CD4-positive, alpha-beta T cell (primary cell): ENCODE measurements at regions of chr15 and their contacts with region 1.

Region 1: GRCh38 chr15:81106560-81106959 is 27.5 kb upstream of the CFAP161 start:
- DNase-seq: peak in 13 of 14 experiments; percentile 4 to 64 (median 20)
- ATAC-seq: peak; percentile 24
- H3K4me3 ChIP-seq: no peak overlapping the region
- H3K4me3 Mint-ChIP-seq: no peak overlapping the region
- H3K27ac ChIP-seq: no peak overlapping the region
- H3K27ac Mint-ChIP-seq: no peak overlapping the region
- H3K4me1 ChIP-seq: no peaks in the 10 kb centered on the region
- H3K4me1 Mint-ChIP-seq: no peaks in the 10 kb centered on the region
- H3K27me3 ChIP-seq: peaks cover 5 to 7% of the 10 kb centered on the region in 2 experiments
- H3K27me3 Mint-ChIP-seq: peaks cover 35% of the 10 kb centered on the region
- CTCF ChIP-seq: peak; percentile 79

Region 2: GRCh38 chr15:80455668-80456442 is 650.7 kb before region 1 on chr15:
- CTCF ChIA-PET with region 1: no interaction called
- POLR2A ChIA-PET with region 1: no interaction called
- intact Hi-C with region 1: loop called in 1 of 2 experiments (anchors 5 kb)
- DNase-seq: peak; percentile 17 to 81 (median 31)
- ATAC-seq: peak; percentile 64
- H3K4me3 ChIP-seq: no peak overlapping the region
- H3K4me3 Mint-ChIP-seq: no peak overlapping the region
- H3K27ac ChIP-seq: no peak overlapping the region
- H3K27ac Mint-ChIP-seq: no peak overlapping the region
- H3K4me1 ChIP-seq: peaks cover 2% of the 10 kb centered on the region
- H3K4me1 Mint-ChIP-seq: peaks cover 7% of the 10 kb centered on the region
- H3K27me3 ChIP-seq: peaks cover 0 to 11% of the 10 kb centered on the region in 2 experiments
- H3K27me3 Mint-ChIP-seq: peaks cover 23% of the 10 kb centered on the region
- CTCF ChIP-seq: peak; percentile 83

Region 3: GRCh38 chr15:80934761-80935221 is 171.8 kb before region 1 on chr15:
- CTCF ChIA-PET with region 1: no interaction called
- POLR2A ChIA-PET with region 1: no interaction called
- intact Hi-C with region 1: no loop called
- DNase-seq: no peak
- ATAC-seq: no peak
- H3K4me3 ChIP-seq: no peak overlapping the region
- H3K4me3 Mint-ChIP-seq: no peak overlapping the region
- H3K27ac ChIP-seq: no peak overlapping the region
- H3K27ac Mint-ChIP-seq: no peak overlapping the region
- H3K4me1 ChIP-seq: no peaks in the 10 kb centered on the region
- H3K4me1 Mint-ChIP-seq: no peaks in the 10 kb centered on the region
- H3K27me3 ChIP-seq: no peaks in the 10 kb centered on the region
- H3K27me3 Mint-ChIP-seq: no peaks in the 10 kb centered on the region
- CTCF ChIP-seq: no peak

Region 4: DNA sequence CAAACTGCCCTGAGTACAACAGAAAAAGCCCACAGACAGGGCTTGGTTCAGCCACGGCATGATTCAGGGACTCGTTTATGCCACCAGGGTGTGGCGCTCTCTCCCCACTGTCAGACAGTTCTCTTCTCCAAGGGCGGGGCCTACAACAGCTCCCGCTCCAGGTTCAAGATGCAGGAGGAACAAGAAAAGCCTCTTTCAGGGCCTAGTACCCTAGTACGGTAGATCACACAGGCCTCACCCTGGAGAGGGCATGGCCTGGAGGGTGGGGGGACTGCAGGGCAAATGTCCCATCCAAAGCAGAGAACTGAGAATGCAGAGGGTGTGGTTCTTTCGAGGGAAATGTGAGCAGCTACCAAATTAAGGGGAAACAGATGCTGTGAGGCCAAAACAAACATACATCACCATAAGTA is 128.9 kb before region 1 on chr15:
- CTCF ChIA-PET with region 1: no interaction called
- POLR2A ChIA-PET with region 1: no interaction called
- intact Hi-C with region 1: loop called (anchors 1 to 2 kb)
- DNase-seq: peak in 10 of 14 experiments; percentile 21 to 71 (median 42)
- ATAC-seq: peak; percentile 51
- H3K4me3 ChIP-seq: no peak overlapping the region
- H3K4me3 Mint-ChIP-seq: no peak overlapping the region
- H3K27ac ChIP-seq: no peak overlapping the region
- H3K27ac Mint-ChIP-seq: peak overlapping the region; percentile 34
- H3K4me1 ChIP-seq: peaks cover 13% of the 10 kb centered on the region
- H3K4me1 Mint-ChIP-seq: peaks cover 50% of the 10 kb centered on the region
- H3K27me3 ChIP-seq: no peaks in the 10 kb centered on the region
- H3K27me3 Mint-ChIP-seq: no peaks in the 10 kb centered on the region
- CTCF ChIP-seq: no peak

Region 5: DNA sequence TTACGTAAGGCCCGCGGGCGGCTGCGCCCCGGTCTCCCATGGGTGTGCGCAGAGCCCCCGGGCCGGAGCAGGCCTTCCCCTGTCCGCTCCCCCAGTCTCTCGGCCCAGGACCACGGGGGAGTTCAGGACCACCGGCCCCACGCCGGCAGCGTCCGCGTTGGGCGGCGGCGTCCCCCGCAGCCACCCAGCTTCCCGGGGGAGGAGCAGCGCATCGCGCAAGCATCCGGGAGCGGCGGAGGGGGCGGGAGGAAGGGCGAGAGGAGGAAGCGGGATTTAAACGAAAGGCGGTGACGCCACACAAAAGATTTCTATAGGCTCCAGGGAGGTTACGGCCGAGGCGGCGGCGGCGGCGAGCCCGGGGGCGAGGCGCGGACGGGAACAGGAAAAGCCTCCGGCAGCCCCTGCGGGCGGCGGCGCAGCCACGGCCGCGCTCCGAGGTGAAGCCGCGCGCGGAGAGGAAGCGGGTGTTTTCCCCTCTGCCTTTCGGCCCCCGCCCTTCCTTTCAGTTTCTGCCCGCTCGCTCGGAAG is 105.9 kb before region 1 on chr15 and contains the start of gene TLNRD1:
- CTCF ChIA-PET with region 1: no interaction called
- POLR2A ChIA-PET with region 1: no interaction called
- intact Hi-C with region 1: loop called in 1 of 2 experiments (anchors 5 kb)
- DNase-seq: peak; percentile 63 to 94 (median 76)
- ATAC-seq: peak; percentile 67
- H3K4me3 ChIP-seq: peak within 1 kb of the TSS; percentile 97
- H3K4me3 Mint-ChIP-seq: peak within 1 kb of the TSS; percentile 95
- H3K27ac ChIP-seq: peak within 1 kb of the TSS; percentile 94 to 96
- H3K27ac Mint-ChIP-seq: peak within 1 kb of the TSS; percentile 92
- H3K4me1 ChIP-seq: peaks cover 41% of the 10 kb centered on the region
- H3K4me1 Mint-ChIP-seq: peaks cover 62% of the 10 kb centered on the region
- H3K27me3 ChIP-seq: no peaks in the 10 kb centered on the region
- H3K27me3 Mint-ChIP-seq: no peaks in the 10 kb centered on the region
- CTCF ChIP-seq: no peak
- total RNA-seq, gene TLNRD1: 10.5 to 12.3 TPM

Region 6: DNA sequence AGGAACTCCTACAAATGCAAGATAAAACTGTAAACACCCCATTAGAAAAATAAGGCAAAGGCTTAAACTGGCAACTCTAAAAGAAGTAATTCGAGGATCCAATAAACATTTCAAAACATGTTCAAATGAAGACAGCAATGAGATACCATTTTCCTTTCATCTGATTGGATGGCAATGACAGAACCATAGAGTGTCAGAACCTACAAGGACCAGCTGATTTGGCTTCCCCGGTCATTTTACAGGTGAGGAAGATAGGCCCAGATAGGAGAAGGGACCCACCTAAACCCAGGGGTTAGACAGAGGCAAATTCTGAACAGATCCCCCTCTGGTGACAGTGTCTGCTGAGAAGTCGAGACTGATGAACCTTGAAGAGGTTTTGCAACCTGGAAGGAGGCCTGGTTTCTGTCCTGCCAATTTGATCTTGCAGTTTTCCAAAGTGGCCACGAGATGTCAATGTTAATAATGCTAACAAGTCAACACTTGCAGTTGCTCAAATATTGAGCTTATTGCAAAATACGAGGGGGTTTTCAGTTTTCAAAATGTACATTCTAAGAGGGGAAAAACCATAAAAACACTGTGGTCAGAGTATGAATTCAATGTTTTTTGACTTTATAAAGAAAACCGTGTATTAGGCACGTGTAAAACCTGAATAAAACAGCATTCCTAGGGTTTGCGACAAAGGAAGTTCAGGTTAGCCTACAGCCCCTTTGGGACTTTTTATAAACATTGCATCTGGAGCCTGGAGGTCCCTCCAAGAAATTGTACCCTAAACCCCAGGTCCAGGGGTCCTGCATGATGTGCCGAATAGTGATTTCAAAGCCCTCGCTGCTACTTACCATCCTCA is 49.0 kb after region 1 on chr15:
- CTCF ChIA-PET with region 1: no interaction called
- POLR2A ChIA-PET with region 1: no interaction called
- intact Hi-C with region 1: no loop called
- DNase-seq: peak in 5 of 14 experiments; percentile 3 to 51 (median 40)
- ATAC-seq: no peak
- H3K4me3 ChIP-seq: no peak overlapping the region
- H3K4me3 Mint-ChIP-seq: no peak overlapping the region
- H3K27ac ChIP-seq: no peak overlapping the region
- H3K27ac Mint-ChIP-seq: no peak overlapping the region
- H3K4me1 ChIP-seq: peaks cover under 1% of the 10 kb centered on the region
- H3K4me1 Mint-ChIP-seq: peaks cover under 1% of the 10 kb centered on the region
- H3K27me3 ChIP-seq: no peaks in the 10 kb centered on the region
- H3K27me3 Mint-ChIP-seq: peaks cover 23% of the 10 kb centered on the region
- CTCF ChIP-seq: peak; percentile 43

Region 7: DNA sequence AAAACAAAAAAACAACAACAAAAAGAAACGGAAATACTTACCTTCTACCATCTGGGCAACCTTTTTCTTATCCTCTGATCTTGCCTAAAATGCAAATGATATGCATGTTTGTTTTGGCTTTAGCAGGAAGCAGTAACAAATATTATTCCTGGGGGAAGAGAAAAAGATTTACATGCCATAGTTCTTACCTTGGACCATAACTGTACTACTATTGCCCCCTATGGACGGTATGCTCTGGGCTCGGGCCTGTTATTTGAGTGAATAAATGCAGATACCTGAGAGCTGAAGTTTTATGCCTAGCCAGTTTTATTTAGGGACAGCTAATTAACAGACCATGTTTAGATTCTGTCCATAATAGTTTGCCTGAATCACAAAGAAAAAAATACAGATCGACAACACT is 230.0 kb after region 1 on chr15:
- CTCF ChIA-PET with region 1: no interaction called
- POLR2A ChIA-PET with region 1: no interaction called
- intact Hi-C with region 1: loop called in 1 of 2 experiments (anchors 2 kb)
- DNase-seq: peak in 11 of 14 experiments; percentile 23 to 71 (median 50)
- ATAC-seq: no peak
- H3K4me3 ChIP-seq: no peak overlapping the region
- H3K4me3 Mint-ChIP-seq: no peak overlapping the region
- H3K27ac ChIP-seq: no peak overlapping the region
- H3K27ac Mint-ChIP-seq: no peak overlapping the region
- H3K4me1 ChIP-seq: no peaks in the 10 kb centered on the region
- H3K4me1 Mint-ChIP-seq: peaks cover 13% of the 10 kb centered on the region
- H3K27me3 ChIP-seq: no peaks in the 10 kb centered on the region
- H3K27me3 Mint-ChIP-seq: no peaks in the 10 kb centered on the region
- CTCF ChIP-seq: peak; percentile 71

Region 8: DNA sequence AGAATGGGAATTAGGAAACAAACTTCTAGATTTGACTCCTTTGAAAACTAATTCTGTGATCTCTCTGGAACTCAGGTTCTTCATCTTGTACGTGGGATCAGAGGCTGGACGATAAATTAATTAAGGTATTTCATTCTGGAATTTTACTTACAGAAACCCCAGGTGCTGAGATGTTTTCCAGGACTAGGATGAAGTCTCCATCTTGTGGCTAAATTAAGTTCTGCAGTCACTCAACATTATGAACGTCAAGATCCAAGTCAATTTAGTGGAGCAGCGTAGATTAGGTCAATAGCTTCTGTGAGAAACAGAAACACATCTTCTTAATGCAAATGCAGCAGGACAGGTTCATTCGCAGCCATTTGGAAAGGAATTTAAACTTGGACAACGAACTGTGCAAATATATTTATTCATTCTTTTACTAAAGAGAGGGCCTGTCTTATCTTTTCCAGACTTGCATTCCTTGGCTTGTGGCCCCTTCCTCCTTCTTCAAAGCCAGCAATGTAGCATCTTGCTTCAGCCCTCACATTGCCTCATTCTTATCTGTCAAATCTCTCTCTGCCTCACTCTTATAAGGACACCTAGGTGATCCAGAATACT is 294.2 kb after region 1 on chr15:
- CTCF ChIA-PET with region 1: interaction called, 3 read pairs
- POLR2A ChIA-PET with region 1: no interaction called
- intact Hi-C with region 1: loop called (anchors 1 to 5 kb)
- DNase-seq: peak in 4 of 14 experiments; percentile 5 to 77 (median 66)
- ATAC-seq: peak; percentile 41
- H3K4me3 ChIP-seq: no peak overlapping the region
- H3K4me3 Mint-ChIP-seq: no peak overlapping the region
- H3K27ac ChIP-seq: no peak overlapping the region
- H3K27ac Mint-ChIP-seq: no peak overlapping the region
- H3K4me1 ChIP-seq: no peaks in the 10 kb centered on the region
- H3K4me1 Mint-ChIP-seq: no peaks in the 10 kb centered on the region
- H3K27me3 ChIP-seq: no peaks in the 10 kb centered on the region
- H3K27me3 Mint-ChIP-seq: peaks cover 6% of the 10 kb centered on the region
- CTCF ChIP-seq: peak; percentile 81

Region 9: DNA sequence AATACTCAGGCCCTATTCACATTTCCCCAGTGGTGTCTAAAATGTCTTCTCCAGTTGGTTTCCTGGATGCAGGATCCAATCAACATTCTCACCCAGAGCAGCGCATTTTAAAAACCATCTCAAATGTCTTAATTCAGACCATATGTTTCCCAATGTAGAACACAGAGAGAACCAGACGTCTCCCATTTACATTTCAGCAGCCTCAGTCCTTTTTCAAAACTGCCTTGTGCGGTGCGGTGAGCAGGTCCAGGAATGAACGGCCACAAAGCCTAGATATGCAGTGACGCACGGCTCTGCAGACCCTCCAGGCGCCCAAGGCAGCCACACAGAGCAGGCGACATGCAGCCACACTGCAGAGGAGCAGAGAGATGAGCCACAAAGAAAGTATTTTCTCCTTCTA is 1005.4 kb after region 1 on chr15:
- CTCF ChIA-PET with region 1: no interaction called
- POLR2A ChIA-PET with region 1: no interaction called
- intact Hi-C with region 1: no loop called
- DNase-seq: no peak
- ATAC-seq: no peak
- H3K4me3 ChIP-seq: no peak overlapping the region
- H3K4me3 Mint-ChIP-seq: no peak overlapping the region
- H3K27ac ChIP-seq: no peak overlapping the region
- H3K27ac Mint-ChIP-seq: no peak overlapping the region
- H3K4me1 ChIP-seq: no peaks in the 10 kb centered on the region
- H3K4me1 Mint-ChIP-seq: peaks cover 5% of the 10 kb centered on the region
- H3K27me3 ChIP-seq: no peaks in the 10 kb centered on the region
- H3K27me3 Mint-ChIP-seq: no peaks in the 10 kb centered on the region
- CTCF ChIP-seq: no peak

Region 10: DNA sequence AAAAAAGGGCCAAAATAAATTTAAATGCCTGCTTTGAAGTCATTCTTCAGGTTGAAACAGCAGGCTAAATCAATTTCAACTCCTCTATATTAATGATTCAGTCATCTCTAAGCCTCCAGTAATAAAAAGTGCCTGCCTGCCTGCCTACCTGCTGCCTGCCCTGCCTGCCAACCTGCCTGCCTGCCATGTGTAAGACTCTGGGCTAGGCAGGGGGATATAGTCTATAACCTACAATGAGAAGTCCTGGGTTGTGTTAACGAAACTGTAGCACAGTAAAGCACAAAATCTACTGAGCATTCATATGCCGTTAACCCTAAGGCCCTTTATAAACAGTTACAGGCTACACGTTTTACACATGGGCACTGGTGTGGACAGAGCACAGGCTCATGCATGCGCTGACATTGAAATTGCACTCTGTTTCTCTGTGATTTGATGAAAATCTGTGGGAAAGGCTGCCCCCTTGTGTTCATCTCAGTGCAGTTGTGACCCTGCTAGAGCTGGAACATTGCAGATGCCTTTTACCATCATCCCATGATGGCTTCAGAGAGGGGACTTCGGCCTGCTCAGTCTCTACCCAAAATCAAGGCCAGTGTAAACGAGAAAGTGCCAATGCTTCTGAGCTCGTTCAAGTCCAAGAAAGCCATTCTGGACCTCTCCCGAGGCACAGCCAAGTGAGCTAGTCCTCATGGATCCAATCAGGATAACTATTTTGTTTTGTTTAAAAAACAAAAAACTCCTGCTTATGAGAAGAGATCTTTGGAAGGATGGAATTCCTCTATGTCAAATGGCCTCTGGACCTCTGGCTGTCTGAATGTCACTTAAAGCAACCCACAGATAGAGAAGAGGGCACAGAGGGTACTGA is 1091.4 kb after region 1 on chr15:
- CTCF ChIA-PET with region 1: no interaction called
- POLR2A ChIA-PET with region 1: no interaction called
- intact Hi-C with region 1: loop called in 1 of 2 experiments (anchors 2 kb)
- DNase-seq: peak; percentile 17 to 72 (median 41)
- ATAC-seq: peak; percentile 68
- H3K4me3 ChIP-seq: no peak overlapping the region
- H3K4me3 Mint-ChIP-seq: no peak overlapping the region
- H3K27ac ChIP-seq: no peak overlapping the region
- H3K27ac Mint-ChIP-seq: no peak overlapping the region
- H3K4me1 ChIP-seq: no peaks in the 10 kb centered on the region
- H3K4me1 Mint-ChIP-seq: no peaks in the 10 kb centered on the region
- H3K27me3 ChIP-seq: no peaks in the 10 kb centered on the region
- H3K27me3 Mint-ChIP-seq: no peaks in the 10 kb centered on the region
- CTCF ChIP-seq: peak; percentile 63